GM10248 (cell line): ENCODE measurements at regions of chr11 and their contacts with region 1.

Region 1: GRCh38 chr11:59197991-59198390 is 14.7 kb downstream of the MPEG1 start:
- DNase-seq: no peak
- CTCF ChIP-seq: no peak

Region 2: GRCh38 chr11:59186130-59186594 is 11.8 kb before region 1 on chr11:
- CTCF ChIA-PET with region 1: interaction called, 962 read pairs
- POLR2A ChIA-PET with region 1: no interaction called
- DNase-seq: peak; percentile 79
- CTCF ChIP-seq: peak; percentile 59

Region 3: DNA sequence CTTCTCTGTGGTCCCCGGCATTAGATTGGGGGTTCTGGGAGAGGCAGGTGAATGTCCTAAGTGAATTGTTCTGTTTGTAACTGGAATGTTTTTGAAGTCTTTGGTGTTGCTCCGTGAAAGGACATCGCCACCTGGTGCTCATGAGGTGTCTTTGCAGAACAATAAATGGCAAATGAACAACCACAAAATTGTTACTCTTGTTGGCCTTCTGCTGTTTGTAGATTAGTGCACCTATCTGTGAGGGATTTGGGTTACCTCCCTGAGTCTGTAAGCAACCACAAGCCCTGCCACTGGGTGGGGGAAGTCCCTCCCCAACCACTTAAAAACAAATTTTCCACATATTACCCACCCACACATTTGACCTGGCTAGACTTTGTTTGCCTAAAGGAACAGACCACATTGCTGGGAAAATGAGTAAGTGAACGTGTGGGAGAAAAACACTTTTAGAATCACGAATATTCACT is 10.0 kb after region 1 on chr11:
- CTCF ChIA-PET with region 1: interaction called, 15 read pairs
- POLR2A ChIA-PET with region 1: no interaction called
- DNase-seq: peak; percentile 62
- CTCF ChIP-seq: peak; percentile 66

Region 4: GRCh38 chr11:59224351-59224928 is 26.4 kb after region 1 on chr11:
- CTCF ChIA-PET with region 1: interaction called, 12 read pairs
- POLR2A ChIA-PET with region 1: no interaction called
- DNase-seq: no peak
- CTCF ChIP-seq: no peak